ENCODE measurements at regions of chr19 and their contacts with region 1.

Region 1: DNA sequence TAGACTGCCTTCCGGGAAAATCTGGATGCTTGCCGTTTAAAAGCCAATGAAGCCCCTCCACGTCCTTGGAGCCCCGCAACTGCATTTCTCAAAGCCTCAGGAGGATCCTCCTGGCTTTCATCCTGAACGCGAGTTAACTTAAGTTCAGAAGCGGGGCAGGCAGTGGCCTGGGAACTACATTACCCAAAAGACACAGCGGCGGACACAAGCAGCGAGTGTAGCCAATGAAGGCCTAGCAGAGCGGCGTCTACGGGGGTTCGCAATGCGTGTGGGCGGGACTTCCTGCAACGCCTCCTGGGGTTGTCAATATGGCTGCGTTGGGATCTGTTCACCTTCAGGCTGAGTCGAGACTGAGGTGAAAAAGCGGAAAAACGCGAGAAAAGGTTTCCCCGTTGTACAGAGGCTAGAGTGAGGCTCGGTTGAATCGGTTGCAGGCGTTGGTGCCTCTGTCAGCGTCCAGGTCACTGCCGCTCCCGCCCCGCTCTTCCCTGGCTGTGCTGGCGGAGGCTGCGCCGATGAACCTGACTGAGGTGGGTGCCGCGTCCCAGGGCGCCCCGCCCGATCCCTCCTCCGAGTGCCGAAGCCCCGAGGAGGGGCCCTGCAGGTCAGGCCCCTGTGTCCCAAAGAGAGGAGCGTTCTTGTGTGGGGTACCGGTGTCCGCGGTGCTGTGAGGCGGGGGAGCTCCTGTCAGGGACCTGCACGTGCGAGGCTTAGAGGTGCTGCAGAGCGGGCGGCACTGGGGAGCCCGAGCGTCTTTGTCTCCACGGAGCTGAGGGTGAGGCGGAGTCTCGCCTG is at the start of gene ZNF17:
- DNase-seq: peak; percentile 79
- ATAC-seq: peak; percentile 100
- H3K4me3 Mint-ChIP-seq: peak within 1 kb of the TSS; percentile 94
- H3K27ac Mint-ChIP-seq: peak within 1 kb of the TSS; percentile 85
- H3K4me1 Mint-ChIP-seq: peaks cover 24% of the 10 kb centered on the region
- H3K27me3 Mint-ChIP-seq: no peaks in the 10 kb centered on the region
- CTCF ChIP-seq: no peak
- total RNA-seq, gene ZNF17: 16.1 and 18.6 TPM in 2 replicates

Region 2: GRCh38 chr19:57103573-57104277 is 307.3 kb before region 1 on chr19:
- CTCF ChIA-PET with region 1: no interaction called
- POLR2A ChIA-PET with region 1: no interaction called
- intact Hi-C with region 1: loop called (anchors 5 kb)
- DNase-seq: peak; percentile 27
- ATAC-seq: peak; percentile 82
- H3K4me3 Mint-ChIP-seq: peak overlapping the region; percentile 57
- H3K27ac Mint-ChIP-seq: peak overlapping the region; percentile 53
- H3K4me1 Mint-ChIP-seq: peaks cover 5% of the 10 kb centered on the region
- H3K27me3 Mint-ChIP-seq: peaks cover 11% of the 10 kb centered on the region
- CTCF ChIP-seq: no peak

Region 3: DNA sequence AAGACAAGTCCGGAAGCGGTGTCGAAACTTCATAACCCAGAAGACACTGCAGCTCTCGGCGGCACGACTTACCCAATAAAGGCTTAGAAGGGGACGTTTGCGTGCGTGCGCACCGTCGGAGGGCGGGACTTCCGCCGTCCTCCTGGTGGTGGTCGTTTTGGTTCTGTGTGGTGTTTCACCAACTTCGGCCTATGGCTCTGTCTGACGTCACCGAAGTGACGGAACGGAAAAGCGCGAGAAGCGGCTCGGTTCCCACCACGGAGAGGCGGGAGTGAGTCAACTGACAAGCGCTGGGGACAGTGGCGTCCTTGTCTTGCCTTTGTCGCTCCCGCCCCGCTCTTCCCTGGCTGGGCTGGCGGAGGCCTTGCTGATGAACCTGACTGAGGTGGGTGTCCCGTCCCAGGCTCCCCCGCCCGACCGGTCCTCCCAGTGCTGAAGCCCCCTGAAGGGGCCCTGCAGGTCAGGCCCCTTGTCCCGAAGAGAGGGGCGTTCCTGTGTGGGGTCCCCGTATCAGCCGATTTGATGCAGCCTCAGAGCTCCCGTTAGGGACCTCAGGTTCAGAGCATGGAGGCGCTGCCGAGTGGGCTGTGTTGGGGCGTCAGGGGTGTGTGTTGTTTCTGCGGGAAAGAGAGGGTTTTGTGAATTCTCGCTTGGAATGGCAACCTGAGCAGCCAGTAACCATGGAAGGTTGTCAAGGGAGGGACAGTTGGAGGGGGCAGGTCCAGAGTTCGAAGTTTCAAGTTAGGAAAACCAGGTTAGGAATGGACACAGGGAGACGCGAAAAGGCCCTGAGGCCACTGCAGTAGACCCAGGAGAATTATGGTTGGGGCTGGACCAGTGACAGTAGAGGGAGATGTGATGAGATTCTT is 21.1 kb before region 1 on chr19 and contains the start of gene ZNF548:
- CTCF ChIA-PET with region 1: interaction called, 3 read pairs
- POLR2A ChIA-PET with region 1: interaction called, 5 read pairs
- intact Hi-C with region 1: loop called (anchors 1 kb)
- DNase-seq: peak; percentile 96
- ATAC-seq: peak; percentile 98
- H3K4me3 Mint-ChIP-seq: peak within 1 kb of the TSS; percentile 94
- H3K27ac Mint-ChIP-seq: peak within 1 kb of the TSS; percentile 91
- H3K4me1 Mint-ChIP-seq: peaks cover 34% of the 10 kb centered on the region
- H3K27me3 Mint-ChIP-seq: no peaks in the 10 kb centered on the region
- CTCF ChIP-seq: no peak
- total RNA-seq, gene ZNF548: 38.7 and 39.7 TPM in 2 replicates

Region 4: DNA sequence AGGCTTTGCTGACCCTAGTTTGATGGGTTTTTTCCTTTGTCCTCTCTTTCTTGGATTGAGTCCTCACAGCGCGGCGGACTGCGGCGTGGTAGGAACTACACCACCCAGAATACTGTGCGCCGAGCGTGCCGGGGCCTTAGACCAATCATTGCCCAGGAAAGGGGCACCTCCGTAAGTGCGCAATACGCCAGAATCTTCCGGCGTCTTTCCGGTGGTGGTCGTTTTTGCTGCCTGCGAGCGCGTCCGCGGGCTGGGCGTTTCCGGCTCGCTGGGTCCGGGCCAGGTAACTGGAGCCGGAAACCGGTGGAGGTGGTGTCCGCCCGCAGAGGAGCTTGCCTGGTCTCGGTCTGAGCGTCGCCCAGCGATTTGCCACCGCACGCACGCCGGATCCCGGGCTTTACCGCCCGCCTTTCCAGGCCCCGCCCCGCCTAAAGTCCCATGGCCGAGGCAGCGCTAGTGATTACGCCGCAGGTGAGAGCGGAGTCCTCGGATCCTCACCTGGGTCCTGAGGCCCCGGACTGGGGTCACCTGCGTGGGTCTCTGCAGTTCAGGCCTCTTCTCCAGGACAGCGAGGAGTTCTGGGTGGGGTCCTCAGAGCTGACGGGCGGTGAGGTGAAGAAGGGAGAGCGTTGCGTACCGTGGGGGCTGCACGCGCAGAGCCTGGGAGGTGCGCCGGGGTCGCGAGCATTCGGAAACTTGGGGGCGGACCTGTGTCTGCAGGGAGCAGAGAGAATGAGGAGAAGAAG is 116.2 kb after region 1 on chr19 and contains the start of gene ZNF549:
- CTCF ChIA-PET with region 1: no interaction called
- POLR2A ChIA-PET with region 1: no interaction called
- intact Hi-C with region 1: loop called (anchors 1 kb)
- DNase-seq: peak; percentile 78
- ATAC-seq: peak; percentile 99
- H3K4me3 Mint-ChIP-seq: peak within 1 kb of the TSS; percentile 96
- H3K27ac Mint-ChIP-seq: peak within 1 kb of the TSS; percentile 88
- H3K4me1 Mint-ChIP-seq: peaks cover 24% of the 10 kb centered on the region
- H3K27me3 Mint-ChIP-seq: no peaks in the 10 kb centered on the region
- CTCF ChIP-seq: no peak
- total RNA-seq, gene ZNF549: 14.0 and 16.9 TPM in 2 replicates

Region 5: DNA sequence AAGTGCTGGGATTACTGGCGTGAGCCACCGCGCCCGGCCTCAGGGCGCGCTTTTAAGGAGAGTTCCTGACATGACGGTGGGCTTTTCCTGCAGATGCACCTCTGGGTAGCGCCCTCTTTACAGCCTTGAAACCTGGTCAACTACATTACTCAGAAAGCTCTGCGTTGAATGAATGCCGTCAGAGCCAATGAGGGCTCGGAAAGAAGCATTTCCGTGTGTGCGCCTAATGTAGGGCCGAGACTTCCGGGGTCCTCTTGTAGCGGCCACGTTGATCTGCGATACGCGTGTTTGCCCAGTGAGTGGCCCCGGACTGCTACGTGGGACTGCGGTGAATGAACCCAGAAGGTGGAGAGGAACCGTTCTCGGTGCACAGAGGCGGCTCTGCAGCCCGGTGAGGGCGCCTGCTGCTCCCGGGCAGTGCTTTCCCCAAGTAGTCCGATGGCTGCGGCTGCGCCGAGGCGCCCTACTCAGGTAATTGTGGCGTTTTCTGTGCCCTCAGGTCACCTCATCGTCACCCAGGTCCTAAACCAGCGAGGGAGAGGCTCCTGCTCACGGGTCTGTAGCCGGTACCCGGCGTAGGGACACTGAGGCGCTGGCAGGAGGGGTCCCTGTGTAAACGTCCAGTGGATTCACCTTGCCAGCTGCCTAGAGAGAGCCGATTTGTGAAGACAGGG is 408.5 kb after region 1 on chr19:
- CTCF ChIA-PET with region 1: no interaction called
- POLR2A ChIA-PET with region 1: interaction called, 6 read pairs
- intact Hi-C with region 1: loop called (anchors 5 kb)
- DNase-seq: peak; percentile 60
- ATAC-seq: peak; percentile 84
- H3K4me3 Mint-ChIP-seq: peak overlapping the region; percentile 98
- H3K27ac Mint-ChIP-seq: peak overlapping the region; percentile 97
- H3K4me1 Mint-ChIP-seq: peaks cover 55% of the 10 kb centered on the region
- H3K27me3 Mint-ChIP-seq: no peaks in the 10 kb centered on the region
- CTCF ChIP-seq: no peak

Region 6: DNA sequence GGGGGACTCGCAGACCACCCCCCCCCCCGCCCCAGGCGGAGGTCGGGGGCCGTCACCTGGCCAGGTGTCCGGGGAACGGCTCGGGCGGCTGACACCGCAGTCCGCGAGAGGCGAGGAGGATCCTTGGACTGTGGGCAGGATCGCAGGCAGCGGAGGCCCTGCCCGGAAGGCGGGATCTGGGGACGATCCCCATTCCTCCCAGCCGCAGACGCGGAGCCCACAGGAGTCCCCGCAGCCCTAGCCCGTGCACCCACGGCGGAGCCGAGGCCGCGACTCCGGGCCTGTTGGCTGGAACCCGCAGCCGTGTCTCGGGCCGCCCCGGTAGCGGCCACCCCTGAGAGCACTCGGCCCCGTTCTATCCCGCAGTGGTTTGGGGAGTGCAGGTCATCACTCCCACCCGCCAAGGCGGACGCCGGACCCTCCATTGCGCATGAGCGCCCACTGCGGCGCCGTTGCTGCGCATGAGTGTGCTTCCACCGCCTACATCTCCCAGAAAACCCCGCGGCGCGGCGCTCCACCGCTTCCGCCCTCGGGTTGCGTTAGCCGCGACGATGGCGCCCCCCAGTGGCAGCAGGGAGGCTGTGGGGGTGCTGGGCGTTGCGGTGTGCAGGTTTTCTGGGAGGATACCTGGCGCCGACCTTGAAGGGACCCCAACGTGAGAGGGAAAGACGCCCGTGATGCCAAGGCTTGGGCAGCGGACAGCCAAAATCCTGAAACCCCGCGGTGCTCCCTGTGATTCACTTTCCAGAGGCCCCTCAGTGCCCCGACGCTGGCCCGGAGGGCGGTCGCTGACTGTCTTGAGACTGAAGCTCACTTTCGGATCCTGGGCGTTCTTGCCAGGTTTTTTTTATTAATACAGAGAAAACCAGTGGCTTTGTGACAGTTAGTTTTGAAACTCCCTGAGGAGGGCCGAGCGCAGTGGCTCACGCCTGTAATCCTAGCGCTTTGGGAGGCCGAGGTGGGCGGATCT is 743.9 kb after region 1 on chr19:
- CTCF ChIA-PET with region 1: interaction called, 3 read pairs
- POLR2A ChIA-PET with region 1: no interaction called
- intact Hi-C with region 1: loop called (anchors 1 kb)
- DNase-seq: peak; percentile 99
- ATAC-seq: peak; percentile 82
- H3K4me3 Mint-ChIP-seq: peak overlapping the region; percentile 82
- H3K27ac Mint-ChIP-seq: peak overlapping the region; percentile 70
- H3K4me1 Mint-ChIP-seq: peaks cover 12% of the 10 kb centered on the region
- H3K27me3 Mint-ChIP-seq: no peaks in the 10 kb centered on the region
- CTCF ChIP-seq: peak; percentile 16